H1 (cell line): ENCODE measurements at regions of chr19 and their contacts with region 1.

Region 1: DNA sequence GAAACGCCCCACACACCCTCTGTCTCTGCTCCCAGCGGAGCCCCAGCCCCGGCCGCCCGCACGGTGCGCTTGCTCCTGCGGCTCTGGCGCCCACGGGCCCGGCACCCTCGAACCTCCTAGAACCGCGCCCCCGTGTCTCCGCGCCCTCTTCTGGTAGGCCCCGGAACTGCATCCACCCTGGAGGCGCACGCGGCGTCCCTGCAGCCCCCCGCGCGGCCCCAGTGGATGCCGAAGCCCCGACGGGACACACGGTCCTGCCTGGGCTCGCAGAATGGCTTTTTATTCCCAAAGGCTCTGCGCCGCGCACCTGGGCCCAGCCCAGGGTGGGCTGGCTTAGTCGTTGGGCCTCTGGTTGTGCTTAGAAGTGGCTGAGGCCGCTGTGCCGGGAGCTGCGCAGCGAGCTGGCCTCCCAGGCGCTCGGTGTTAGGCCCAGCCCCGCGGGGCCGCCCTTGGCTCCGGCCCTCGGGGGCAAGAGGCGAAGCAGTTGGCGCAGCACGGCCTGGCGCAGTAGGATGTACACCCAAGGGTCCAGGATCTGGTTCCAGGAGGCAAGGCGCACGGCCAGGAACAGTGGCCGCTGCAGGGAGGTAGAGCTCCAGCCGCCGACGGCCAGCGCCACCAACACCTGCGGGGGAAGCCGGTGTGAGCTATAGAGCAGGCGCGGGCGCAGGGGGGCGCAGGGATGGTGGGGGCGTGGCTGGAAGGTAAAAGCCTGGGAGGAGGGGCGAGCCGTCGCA is 2.8 kb downstream of the PTGER1 start:
- DNase-seq: peak in 1 of 2 experiments; percentile 98
- H3K4me3 ChIP-seq: peak overlapping the region; percentile 29 to 62 (median 40)
- H3K27ac ChIP-seq: no peak overlapping the region; the same call in 1 of the 2 replicates
- H3K4me1 ChIP-seq: peaks cover 0 to 21% (median 15%) of the 10 kb centered on the region in 4 experiments; a peak in 6 of 7 replicates
- H3K27me3 ChIP-seq: no peaks in the 10 kb centered on the region
- CTCF ChIP-seq: peak; percentile 80 to 90 (median 84)
- EP300 ChIP-seq: no peak
- POLR2A ChIP-seq: no peak
- RAD21 ChIP-seq: peak; percentile 30 to 56; a peak in 3 of 4 replicates

Region 2: DNA sequence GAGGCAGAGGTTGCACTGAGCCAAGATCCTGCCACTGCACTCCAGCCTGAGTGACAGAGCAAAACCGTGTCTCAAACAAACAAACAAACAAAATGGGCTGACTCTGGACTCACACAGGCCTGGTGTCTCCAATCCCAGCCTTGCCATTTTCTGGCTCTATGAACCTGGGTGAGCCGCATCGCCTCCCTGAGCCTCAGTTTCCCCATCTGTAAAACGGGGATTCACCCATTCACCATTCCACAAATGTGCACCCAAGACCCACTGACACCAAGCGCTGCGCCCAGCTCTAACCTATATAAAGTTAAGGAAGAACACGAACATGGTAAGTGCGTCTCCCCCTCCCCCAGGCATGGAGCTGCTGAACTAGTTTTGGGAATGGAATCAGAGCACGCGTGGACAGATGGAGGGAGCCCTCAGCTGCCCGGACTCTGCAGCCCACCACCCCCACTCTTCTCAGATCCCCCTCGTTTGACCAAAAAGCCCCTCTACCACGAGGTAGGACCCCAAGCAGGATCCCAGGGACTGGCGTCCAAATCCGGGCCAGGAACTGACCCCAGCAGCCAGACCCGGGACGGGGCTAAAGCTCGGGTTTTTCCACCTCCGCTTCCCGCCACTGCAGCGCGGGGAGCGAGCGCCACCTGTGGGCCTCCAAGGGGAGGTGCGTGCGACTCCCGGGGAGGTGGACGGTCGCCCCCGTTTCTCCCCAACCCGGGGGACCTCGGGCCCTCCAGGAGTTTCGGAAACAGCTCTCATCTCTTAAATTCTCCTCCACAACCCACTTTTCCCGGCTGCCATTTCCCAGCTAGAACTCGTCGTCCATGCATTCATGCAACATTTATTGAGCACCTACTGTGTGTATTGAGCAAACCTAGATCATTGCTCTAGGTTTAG is 124.1 kb before region 1 on chr19:
- CTCF ChIA-PET with region 1: no interaction called
- POLR2A ChIA-PET with region 1: no interaction called
- DNase-seq: peak; percentile 19 to 92
- H3K4me3 ChIP-seq: peak overlapping the region in 1 of 4 experiments; percentile 28; a peak in 1 of 8 replicates
- H3K27ac ChIP-seq: no peak overlapping the region
- H3K4me1 ChIP-seq: peaks cover 0 to 4% (median 0%) of the 10 kb centered on the region in 4 experiments; a peak in 5 of 7 replicates
- H3K27me3 ChIP-seq: no peaks in the 10 kb centered on the region
- CTCF ChIP-seq: peak; percentile 91 to 96 (median 92)
- EP300 ChIP-seq: 0 out of 3 replicates have a peak, but pooled peaks of 1 of the 2 experiments have one; percentile 11
- POLR2A ChIP-seq: no peak
- RAD21 ChIP-seq: peak; percentile 96 to 97

Region 3: DNA sequence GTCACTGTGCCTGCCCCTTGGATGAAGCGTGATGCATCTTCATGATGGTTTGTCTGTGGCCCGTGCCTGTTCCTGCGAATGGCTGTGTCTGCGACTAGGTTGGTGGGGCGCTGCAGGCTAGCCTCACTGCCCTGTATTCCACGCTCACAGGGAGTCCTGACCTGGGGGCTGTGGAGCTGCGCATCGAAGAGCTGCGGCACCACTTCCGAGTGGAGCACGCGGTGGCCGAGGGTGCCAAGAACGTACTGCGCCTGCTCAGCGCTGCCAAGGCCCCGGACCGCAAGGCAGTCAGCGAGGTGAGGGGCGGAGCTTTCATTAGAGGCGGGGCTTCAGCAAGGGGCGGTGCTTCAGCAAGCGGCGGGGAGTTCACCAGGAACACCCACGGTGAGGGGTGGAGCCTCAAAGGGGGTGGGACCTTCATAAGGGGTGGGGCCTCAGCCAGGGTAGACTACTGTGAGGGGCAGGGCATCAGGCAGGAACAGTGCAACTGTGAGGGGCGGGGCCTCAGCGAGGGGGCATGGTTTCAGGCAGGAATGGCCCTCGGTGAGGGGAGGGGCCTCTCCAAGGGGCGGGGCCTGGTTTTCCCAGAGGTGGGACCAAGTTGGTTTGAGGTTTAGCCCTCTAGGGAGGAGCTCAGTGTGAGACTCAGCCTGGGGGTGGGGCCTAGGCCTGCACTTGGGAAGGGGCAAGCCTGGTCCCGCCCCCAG is 22.0 kb before region 1 on chr19:
- CTCF ChIA-PET with region 1: interaction called, 20 read pairs
- POLR2A ChIA-PET with region 1: interaction called, 10 read pairs
- DNase-seq: peak; percentile 94 to 99
- H3K4me3 ChIP-seq: no peak overlapping the region
- H3K27ac ChIP-seq: no peak overlapping the region
- H3K4me1 ChIP-seq: peaks cover 0 to 4% (median 0%) of the 10 kb centered on the region in 4 experiments; a peak in 1 of 7 replicates
- H3K27me3 ChIP-seq: no peaks in the 10 kb centered on the region
- CTCF ChIP-seq: no peak
- EP300 ChIP-seq: no peak
- POLR2A ChIP-seq: no peak
- RAD21 ChIP-seq: no peak

Region 4: DNA sequence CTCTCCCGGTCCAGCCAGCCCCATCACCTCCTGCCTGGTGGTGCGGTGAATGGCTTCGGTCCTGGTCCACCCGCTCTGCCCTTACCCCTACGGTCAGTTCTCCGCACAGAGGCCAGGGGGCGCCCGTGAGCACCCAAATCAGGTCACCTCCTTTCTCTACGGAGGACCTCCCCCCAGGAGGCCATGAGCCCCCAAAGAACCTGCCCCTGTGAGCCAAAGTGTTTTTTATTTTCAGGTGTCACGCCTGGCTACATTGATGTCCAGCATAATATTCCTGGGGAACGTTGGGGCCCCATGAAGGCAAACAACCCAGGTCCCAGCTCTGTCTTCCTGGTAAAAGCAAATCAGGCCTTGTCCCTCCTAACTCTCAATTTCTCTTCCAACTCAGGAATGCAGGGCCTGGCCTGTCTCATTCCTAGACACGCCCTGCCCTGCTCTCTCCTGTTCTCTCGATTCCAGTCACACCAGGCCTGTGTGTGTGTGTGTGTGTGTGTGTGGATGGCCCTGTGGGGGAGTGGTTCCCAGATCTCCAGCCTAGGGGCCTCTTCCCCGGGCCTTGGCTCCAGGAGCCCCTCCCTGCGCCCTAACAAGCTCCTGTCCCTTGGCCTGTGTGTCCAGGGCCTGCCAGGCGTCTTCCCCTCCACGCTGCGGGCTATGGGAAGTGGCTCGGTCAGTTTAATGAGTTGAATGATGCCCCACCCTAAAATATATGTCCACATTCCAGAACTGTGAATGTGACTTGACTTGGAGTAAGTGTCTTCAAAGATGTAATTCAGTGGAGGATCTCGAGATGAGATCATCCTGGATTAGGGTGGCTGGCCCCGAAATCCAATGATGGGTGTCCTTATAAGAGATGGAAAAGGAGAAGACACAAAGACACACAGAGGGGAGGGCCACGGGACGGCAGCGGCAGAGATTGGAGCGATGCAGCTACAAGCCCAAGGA is 33.4 kb after region 1 on chr19:
- CTCF ChIA-PET with region 1: interaction called, 14 read pairs
- POLR2A ChIA-PET with region 1: no interaction called
- DNase-seq: peak in 1 of 2 experiments; percentile 97
- H3K4me3 ChIP-seq: no peak overlapping the region
- H3K27ac ChIP-seq: peak overlapping the region; percentile 37; the same call in 1 of the 2 replicates
- H3K4me1 ChIP-seq: peaks cover 0 to 4% (median 2%) of the 10 kb centered on the region in 4 experiments; a peak in 3 of 7 replicates
- H3K27me3 ChIP-seq: no peaks in the 10 kb centered on the region
- CTCF ChIP-seq: peak; percentile 75 to 92 (median 89)
- EP300 ChIP-seq: no peak
- POLR2A ChIP-seq: no peak
- RAD21 ChIP-seq: peak in 1 of 2 experiments; percentile 47; a peak in 3 of 4 replicates